ENCODE measurements at regions of chr5 and their contacts with region 1.

Region 1: DNA sequence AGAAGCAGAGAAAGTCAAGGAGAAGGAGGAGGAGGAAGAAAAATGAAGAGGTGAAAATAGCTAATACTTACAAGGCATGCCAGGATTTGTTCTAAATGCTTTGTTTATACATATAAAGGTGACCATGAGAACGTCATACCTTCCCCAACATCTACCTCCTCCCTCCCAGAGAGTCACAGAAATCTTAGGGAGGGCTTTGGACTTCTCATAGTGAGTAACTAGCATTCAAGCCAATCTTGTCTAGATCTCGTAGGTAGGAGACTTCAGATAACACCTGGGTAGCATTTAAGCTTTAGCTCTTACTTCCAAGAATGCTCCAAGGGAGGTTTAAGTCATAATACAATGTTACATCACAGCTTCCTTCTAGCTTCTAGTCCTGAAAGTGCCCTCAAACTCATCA is 36.5 kb upstream of the GPBP1 start:
- DNase-seq: no peak
- H3K4me3 Mint-ChIP-seq: no peak overlapping the region
- H3K27ac Mint-ChIP-seq: no peak overlapping the region
- H3K4me1 Mint-ChIP-seq: no peaks in the 10 kb centered on the region
- H3K27me3 Mint-ChIP-seq: no peaks in the 10 kb centered on the region
- CTCF ChIP-seq: no peak

Region 2: GRCh38 chr5:56900858-56901578 is 236.4 kb before region 1 on chr5:
- CTCF ChIA-PET with region 1: interaction called, 121 read pairs
- POLR2A ChIA-PET with region 1: interaction called, 6 read pairs
- intact Hi-C with region 1: loop called (anchors 1 kb)
- DNase-seq: peak; percentile 63
- H3K4me3 Mint-ChIP-seq: no peak overlapping the region
- H3K27ac Mint-ChIP-seq: no peak overlapping the region
- H3K4me1 Mint-ChIP-seq: no peaks in the 10 kb centered on the region
- H3K27me3 Mint-ChIP-seq: no peaks in the 10 kb centered on the region
- CTCF ChIP-seq: peak; percentile 78

Region 3: GRCh38 chr5:56918054-56918453 is 219.3 kb before region 1 on chr5:
- CTCF ChIA-PET with region 1: interaction called, 11 read pairs
- POLR2A ChIA-PET with region 1: no interaction called
- intact Hi-C with region 1: no loop called
- DNase-seq: no peak
- H3K4me3 Mint-ChIP-seq: no peak overlapping the region
- H3K27ac Mint-ChIP-seq: no peak overlapping the region
- H3K4me1 Mint-ChIP-seq: no peaks in the 10 kb centered on the region
- H3K27me3 Mint-ChIP-seq: no peaks in the 10 kb centered on the region
- CTCF ChIP-seq: no peak

Region 4: DNA sequence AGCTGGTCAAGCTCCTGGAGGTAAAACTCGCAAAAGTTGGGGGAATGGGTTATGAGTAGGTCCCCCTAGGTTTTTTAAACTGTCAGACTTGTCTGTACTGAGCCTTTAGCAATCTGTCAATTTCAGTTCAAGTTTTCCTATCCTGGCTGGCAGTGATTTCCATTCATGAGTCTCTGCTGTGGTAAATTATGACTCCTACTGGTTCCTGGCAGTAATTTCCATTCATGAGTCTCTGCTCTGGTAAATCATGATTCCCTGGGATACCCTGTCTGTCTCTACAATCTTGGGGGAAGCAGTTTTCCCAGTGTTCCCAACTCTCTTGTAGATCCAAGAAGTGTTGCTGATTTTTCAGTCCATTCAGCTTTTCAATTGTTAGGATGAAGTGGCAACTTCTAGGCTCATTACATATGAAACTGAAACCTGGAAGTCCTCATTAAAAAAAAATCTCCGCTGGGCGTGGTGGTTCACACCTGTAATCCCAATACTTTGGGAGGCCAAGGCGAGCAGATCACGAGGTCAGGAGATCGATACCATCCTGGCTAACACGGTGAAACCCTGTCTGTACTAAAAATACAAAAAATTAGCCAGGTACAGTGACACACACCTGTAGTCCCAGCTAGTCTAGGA is 54.8 kb before region 1 on chr5:
- CTCF ChIA-PET with region 1: interaction called, 10 read pairs
- POLR2A ChIA-PET with region 1: no interaction called
- intact Hi-C with region 1: no loop called
- DNase-seq: peak; percentile 42
- H3K4me3 Mint-ChIP-seq: no peak overlapping the region
- H3K27ac Mint-ChIP-seq: no peak overlapping the region
- H3K4me1 Mint-ChIP-seq: no peaks in the 10 kb centered on the region
- H3K27me3 Mint-ChIP-seq: no peaks in the 10 kb centered on the region
- CTCF ChIP-seq: peak; percentile 44

Region 5: DNA sequence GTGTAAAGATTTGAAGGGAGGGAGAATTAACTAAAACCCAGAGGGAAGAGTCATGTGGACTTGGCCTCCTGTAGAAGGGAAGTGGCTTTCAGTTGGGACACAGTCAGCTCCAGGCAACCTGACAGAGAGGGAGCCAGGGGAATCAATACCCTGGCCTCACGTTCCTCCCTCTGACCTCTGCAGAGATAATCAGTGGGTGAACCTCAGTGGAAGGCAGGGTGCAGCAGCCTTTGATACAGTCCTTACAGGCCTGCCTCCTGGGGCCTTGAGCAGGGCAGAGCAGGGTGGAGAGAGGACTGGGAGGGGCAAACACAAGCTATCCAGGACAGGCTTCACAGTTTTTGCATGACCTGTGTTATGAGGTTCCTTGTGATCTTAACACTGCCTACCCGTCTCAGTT is 25.4 kb before region 1 on chr5:
- CTCF ChIA-PET with region 1: no interaction called
- POLR2A ChIA-PET with region 1: no interaction called
- intact Hi-C with region 1: no loop called
- DNase-seq: no peak
- H3K4me3 Mint-ChIP-seq: no peak overlapping the region
- H3K27ac Mint-ChIP-seq: no peak overlapping the region
- H3K4me1 Mint-ChIP-seq: no peaks in the 10 kb centered on the region
- H3K27me3 Mint-ChIP-seq: no peaks in the 10 kb centered on the region
- CTCF ChIP-seq: no peak

Region 6: DNA sequence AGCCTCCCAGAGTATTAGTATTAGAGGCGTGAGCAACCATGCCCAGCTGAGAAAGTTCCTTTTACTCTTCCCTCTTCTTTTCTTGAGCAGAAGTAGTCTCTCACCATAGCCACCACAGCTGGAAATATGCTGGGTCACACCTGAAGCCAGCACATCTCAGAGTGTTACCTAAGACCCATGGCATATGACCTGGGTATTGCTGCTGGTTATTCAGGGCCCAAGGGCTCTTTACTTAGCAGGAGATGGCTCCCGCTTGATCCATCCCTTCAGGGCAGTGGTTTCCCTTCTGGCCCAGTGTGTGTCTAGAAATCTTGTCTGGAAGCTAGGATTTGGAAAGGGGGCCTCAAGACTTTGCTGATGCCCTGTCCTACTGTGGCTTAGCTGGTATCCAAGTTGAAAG is 13.3 kb after region 1 on chr5:
- CTCF ChIA-PET with region 1: interaction called, 15 read pairs
- POLR2A ChIA-PET with region 1: no interaction called
- intact Hi-C with region 1: no loop called
- DNase-seq: no peak
- H3K4me3 Mint-ChIP-seq: no peak overlapping the region
- H3K27ac Mint-ChIP-seq: no peak overlapping the region
- H3K4me1 Mint-ChIP-seq: no peaks in the 10 kb centered on the region
- H3K27me3 Mint-ChIP-seq: no peaks in the 10 kb centered on the region
- CTCF ChIP-seq: no peak

Region 7: GRCh38 chr5:57221049-57221568 is 83.7 kb after region 1 on chr5:
- CTCF ChIA-PET with region 1: interaction called, 25 read pairs
- POLR2A ChIA-PET with region 1: interaction called, 3 read pairs
- intact Hi-C with region 1: loop called (anchors 1 kb)
- DNase-seq: peak; percentile 70
- H3K4me3 Mint-ChIP-seq: no peak overlapping the region
- H3K27ac Mint-ChIP-seq: peak overlapping the region; percentile 42
- H3K4me1 Mint-ChIP-seq: peaks cover 15% of the 10 kb centered on the region
- H3K27me3 Mint-ChIP-seq: no peaks in the 10 kb centered on the region
- CTCF ChIP-seq: peak; percentile 81

Region 8: GRCh38 chr5:57405984-57406383 is 268.6 kb after region 1 on chr5:
- CTCF ChIA-PET with region 1: no interaction called
- POLR2A ChIA-PET with region 1: no interaction called
- intact Hi-C with region 1: no loop called
- DNase-seq: no peak
- H3K4me3 Mint-ChIP-seq: no peak overlapping the region
- H3K27ac Mint-ChIP-seq: no peak overlapping the region
- H3K4me1 Mint-ChIP-seq: no peaks in the 10 kb centered on the region
- H3K27me3 Mint-ChIP-seq: no peaks in the 10 kb centered on the region
- CTCF ChIP-seq: no peak

Measured in MCF 10A (cell line).